ENCODE measurements at regions of chr2 and their contacts with region 1.

Region 1: GRCh38 chr2:20689428-20690264 is 22.7 kb downstream of the GDF7 start:
- DNase-seq: no peak
- ATAC-seq: no peak
- H3K4me3 ChIP-seq: no peak overlapping the region
- H3K27ac ChIP-seq: no peak overlapping the region
- H3K4me1 ChIP-seq: 0 out of 2 replicates have a peak, but pooled peaks cover 3% of the 10 kb centered on the region
- H3K27me3 ChIP-seq: no peaks in the 10 kb centered on the region
- CTCF ChIP-seq: no peak
- POLR2A ChIP-seq: no peak
- RAD21 ChIP-seq: no peak

Region 2: DNA sequence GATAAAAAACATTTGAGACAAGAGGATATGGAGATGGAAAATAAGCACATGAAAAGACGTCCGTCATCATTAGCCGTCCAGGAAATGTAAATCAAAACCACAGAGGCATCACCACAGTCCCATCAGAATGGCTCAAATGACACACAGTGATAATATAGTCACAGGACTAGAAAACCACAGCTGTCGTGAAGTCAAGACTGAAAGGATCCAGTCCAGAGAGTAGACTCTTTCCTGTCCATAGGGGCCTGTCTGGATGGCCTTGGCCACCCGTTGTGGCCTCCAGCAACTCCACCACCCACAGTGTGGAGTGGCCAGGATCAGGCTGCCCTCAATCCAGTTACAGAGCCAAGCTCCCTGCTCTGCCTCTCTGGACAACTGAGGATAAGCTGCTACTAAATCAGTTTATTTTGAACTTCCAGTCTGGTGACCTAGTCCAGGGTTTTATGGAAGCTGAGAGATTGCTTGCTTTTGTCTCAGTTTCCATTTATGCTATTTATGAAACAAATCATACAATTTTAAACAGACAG is 182.4 kb before region 1 on chr2:
- CTCF ChIA-PET with region 1: no interaction called
- POLR2A ChIA-PET with region 1: no interaction called
- dilution Hi-C with region 1: no loop called
- in situ Hi-C with region 1: no loop called
- intact Hi-C with region 1: no loop called
- DNase-seq: peak; percentile 37
- ATAC-seq: no peak
- H3K4me3 ChIP-seq: no peak overlapping the region
- H3K27ac ChIP-seq: no peak overlapping the region
- H3K4me1 ChIP-seq: peaks cover 6% of the 10 kb centered on the region; the same call in 1 of the 2 replicates
- H3K27me3 ChIP-seq: no peaks in the 10 kb centered on the region
- CTCF ChIP-seq: no peak
- POLR2A ChIP-seq: no peak
- RAD21 ChIP-seq: no peak

Region 3: GRCh38 chr2:20755132-20755800 is 65.6 kb after region 1 on chr2:
- CTCF ChIA-PET with region 1: no interaction called
- POLR2A ChIA-PET with region 1: no interaction called
- dilution Hi-C with region 1: no loop called
- in situ Hi-C with region 1: no loop called
- intact Hi-C with region 1: loop called (anchors 5 kb)
- DNase-seq: peak; percentile 7
- ATAC-seq: peak; percentile 46; the same call in 1 of the 2 replicates
- H3K4me3 ChIP-seq: no peak overlapping the region
- H3K27ac ChIP-seq: no peak overlapping the region
- H3K4me1 ChIP-seq: no peaks in the 10 kb centered on the region
- H3K27me3 ChIP-seq: no peaks in the 10 kb centered on the region
- CTCF ChIP-seq: peak; percentile 43
- POLR2A ChIP-seq: no peak
- RAD21 ChIP-seq: peak; percentile 45